Dendritic cell treated with granulocyte-macrophage colony-stimulating factor and Interleukin-4, amounts not matched to agents 40 ng/mL and 50 ng/mL, for 4 days (primary cell): ENCODE measurements at regions of chr6 and their contacts with region 1.

Region 1: GRCh38 chr6:7389451-7390225 is at the starts of genes CAGE1 and RIOK1:
- H3K4me3 Mint-ChIP-seq: peak within 1 kb of the TSS; percentile 84
- H3K27ac Mint-ChIP-seq: peak within 1 kb of the TSS; percentile 91
- H3K4me1 Mint-ChIP-seq: peaks cover 45% of the 10 kb centered on the region
- H3K27me3 Mint-ChIP-seq: no peaks in the 10 kb centered on the region

Region 2: DNA sequence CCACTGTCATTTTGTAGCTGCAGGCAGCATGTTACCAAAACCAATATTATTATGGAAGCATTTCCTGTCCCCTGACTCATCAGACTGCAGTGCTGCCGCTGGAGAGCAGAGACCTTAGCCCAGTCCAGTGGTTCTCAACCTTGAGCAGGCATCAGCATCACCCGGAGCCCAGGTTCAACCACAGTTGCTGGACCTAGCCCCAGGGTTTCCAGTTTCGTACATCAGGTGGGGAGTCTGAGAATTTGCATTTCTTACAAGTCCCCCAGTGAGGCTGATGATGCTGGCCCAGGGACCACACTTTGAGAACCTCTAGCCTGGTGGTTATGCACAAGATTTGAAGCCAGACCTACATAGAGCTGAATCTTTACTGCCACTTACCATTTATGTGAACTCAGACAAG is 753.8 kb before region 1 on chr6:
- intact Hi-C with region 1: no loop called
- H3K4me3 Mint-ChIP-seq: no peak overlapping the region
- H3K27ac Mint-ChIP-seq: peak overlapping the region; percentile 83
- H3K4me1 Mint-ChIP-seq: peaks cover 50% of the 10 kb centered on the region
- H3K27me3 Mint-ChIP-seq: no peaks in the 10 kb centered on the region

Region 3: DNA sequence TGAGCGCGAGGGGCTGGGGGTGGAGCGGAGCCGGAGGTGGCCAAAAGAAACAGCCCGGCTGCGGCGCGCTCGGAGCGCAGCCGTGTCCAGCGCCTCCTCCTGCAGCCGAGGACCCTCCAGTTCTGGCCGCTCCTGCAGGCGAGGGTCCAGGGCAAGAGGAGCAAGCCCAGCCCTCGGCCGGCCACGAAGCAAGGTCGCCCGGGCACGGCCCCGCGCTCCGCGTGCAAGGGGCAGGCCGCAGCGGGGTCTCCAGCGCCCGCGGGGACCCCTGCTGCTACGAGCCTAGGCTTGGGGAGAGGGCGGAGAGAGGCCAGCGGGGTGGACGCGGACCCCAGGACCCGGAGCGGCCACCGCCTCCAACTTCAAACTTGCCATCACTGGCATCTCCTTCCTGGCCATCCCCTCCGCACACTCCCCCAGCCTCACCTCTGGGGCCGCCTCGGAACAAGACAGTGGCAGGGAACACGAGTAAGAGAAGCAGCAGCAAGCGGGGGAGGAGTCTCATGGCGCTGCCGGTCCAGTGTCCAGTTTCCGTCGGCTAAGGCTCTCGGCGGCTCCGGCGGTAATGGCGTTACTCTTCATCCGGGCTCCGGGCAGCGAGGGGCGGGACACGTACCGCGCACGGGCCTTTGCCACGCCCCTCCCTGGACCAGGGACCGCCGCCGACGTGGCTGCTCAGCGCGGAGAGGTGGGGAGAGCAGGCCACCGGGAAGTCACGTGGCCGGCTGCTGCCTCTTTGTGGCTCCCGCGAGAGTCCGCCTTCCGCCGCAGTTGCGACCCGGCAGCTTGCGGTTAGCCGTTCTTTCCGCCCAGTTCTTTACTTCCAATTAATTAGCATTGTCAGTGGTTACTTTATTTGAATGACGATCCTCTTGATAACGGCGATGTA is 76.8 kb before region 1 on chr6 and contains the start of gene SSR1:
- intact Hi-C with region 1: loop called (anchors 1 kb)
- H3K4me3 Mint-ChIP-seq: peak within 1 kb of the TSS; percentile 93
- H3K27ac Mint-ChIP-seq: peak within 1 kb of the TSS; percentile 90
- H3K4me1 Mint-ChIP-seq: peaks cover 50% of the 10 kb centered on the region
- H3K27me3 Mint-ChIP-seq: no peaks in the 10 kb centered on the region

Region 4: GRCh38 chr6:7414811-7415210 is 25.2 kb after region 1 on chr6:
- intact Hi-C with region 1: no loop called
- H3K4me3 Mint-ChIP-seq: no peak overlapping the region
- H3K27ac Mint-ChIP-seq: no peak overlapping the region
- H3K4me1 Mint-ChIP-seq: no peaks in the 10 kb centered on the region
- H3K27me3 Mint-ChIP-seq: no peaks in the 10 kb centered on the region

Region 5: DNA sequence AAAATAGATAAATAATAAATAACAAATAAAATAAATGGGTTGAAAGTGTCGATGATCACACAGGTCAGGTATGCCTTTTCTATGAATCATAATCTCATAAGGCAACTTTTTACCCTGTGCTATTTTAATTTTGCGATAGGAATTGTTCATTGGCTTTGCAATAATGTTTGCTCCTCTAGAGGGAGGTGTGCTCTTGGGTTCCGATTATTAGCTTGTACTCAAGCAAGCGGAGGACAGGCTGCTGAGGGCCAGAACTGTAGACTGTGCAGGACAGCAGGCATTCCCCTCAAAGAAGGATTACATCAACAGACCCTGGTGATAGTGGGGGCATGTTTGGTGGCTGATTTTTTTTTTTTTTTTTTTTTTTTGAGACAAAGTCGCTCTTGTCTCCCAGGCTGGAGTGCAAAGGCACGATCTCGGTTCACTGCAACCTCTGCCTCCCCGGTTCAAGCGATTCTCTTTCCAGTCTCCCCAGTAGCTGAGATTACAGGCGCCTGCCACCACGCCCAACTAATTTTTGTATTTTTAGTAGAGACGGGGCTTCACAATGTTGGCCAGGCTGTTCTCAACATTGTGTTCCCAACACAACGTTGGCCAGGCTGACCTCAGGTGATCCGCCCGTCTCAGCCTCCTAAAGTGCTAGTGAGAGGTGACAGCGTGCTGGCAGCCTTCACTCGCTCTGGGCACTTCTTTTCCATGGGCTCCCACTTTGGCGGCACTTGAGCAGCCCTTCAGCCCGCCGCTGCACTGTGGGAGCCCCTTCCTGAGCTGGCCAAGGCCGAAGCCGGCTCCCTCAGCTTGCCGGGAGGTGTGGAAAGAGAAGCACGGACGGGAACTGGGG is 35.5 kb after region 1 on chr6:
- intact Hi-C with region 1: no loop called
- H3K4me3 Mint-ChIP-seq: no peak overlapping the region
- H3K27ac Mint-ChIP-seq: no peak overlapping the region
- H3K4me1 Mint-ChIP-seq: no peaks in the 10 kb centered on the region
- H3K27me3 Mint-ChIP-seq: no peaks in the 10 kb centered on the region